Aorta (tissue), 5 donors: ENCODE measurements at regions of chr5 and their contacts with region 1.

Region 1: DNA sequence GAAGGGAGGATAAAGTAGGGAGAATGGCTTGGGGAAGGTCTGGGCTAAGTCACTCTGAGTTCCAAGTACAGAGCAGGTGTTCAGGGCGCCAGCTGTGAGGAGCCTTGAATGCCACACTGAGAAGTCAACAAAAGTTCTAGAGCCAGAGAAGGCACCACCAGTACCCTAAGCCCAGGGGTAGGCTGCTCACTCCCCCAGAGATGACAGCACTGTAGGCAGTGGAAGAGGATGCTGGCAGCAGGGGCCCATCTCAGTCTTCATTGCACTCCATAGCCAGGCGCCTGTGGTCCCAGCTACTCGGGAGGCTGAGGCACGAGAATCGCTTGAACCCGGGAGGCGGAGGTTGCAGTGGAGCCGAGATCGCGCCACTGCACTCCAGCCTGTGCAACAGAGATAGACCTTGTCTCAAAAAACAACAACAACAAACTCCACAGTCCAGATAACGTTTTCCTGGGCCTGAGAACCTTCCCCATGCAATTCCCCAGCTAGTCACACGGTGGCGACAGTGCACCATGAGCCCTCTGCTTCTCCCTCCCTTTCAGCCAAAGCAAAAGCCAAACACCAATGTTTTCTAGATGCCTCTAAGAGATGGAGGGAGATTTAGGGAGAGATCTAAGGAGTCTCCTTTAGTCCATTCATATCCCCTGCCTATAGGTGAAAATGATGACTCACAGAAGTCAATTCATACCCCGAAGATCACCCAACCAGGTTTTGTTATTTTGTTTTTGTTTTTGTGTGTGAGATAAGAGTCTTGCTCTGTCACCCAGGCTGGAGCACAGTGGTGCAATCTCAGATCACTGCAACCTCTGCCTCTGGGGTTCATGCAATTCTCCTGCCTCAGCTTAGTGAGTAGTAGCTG is 19.8 kb upstream of the NSD1 start:
- DNase-seq: peak; percentile 78 to 93
- ATAC-seq: peak; percentile 82
- H3K4me3 ChIP-seq: no peak overlapping the region
- H3K27ac ChIP-seq: no peak overlapping the region
- H3K4me1 ChIP-seq: no peaks in the 10 kb centered on the region
- H3K27me3 ChIP-seq: no peaks in the 10 kb centered on the region

Region 2: DNA sequence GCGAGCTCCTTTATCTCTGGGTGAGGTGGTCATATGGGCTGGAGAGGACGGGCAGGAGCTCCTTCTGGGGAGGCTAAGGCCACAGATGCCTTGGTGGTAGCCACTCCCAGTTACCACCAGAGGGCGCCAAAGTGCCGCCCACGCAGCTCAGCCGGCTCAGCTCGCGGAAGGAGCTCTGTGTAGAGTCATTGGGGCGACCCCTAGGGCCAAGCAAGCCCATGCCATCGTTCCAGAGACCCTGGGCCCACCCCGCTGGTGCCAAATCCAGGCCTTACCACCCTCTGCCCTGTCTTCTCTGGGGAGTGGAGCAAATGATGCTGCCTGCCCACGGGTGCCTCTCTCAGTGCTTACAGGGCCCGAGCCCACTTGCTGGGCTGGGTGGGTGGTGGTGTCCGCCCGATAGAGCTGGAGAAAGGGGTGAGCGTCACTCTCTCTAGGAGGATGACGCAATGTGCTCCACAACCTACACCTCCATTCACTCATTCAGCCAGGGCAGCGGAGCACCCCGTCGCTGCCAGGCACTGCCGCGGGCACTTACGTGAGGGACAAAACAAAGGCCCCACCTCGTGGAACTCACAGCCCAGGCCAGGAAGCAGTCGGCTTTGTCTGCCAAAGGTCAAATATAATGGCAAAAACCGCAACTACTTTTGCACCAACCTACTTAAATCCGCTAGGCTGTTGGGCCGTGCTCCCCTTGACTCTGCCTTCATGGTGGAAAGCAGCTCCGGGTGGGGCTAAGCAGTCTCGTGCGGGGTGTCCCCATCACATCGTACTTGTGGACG is 452.7 kb before region 1 on chr5:
- intact Hi-C with region 1: loop called in 1 of 2 experiments (anchors 5 kb)
- DNase-seq: peak; percentile 79 to 91
- ATAC-seq: peak; percentile 85
- H3K4me3 ChIP-seq: no peak overlapping the region
- H3K27ac ChIP-seq: no peak overlapping the region
- H3K4me1 ChIP-seq: no peaks in the 10 kb centered on the region
- H3K27me3 ChIP-seq: no peaks in the 10 kb centered on the region

Region 3: GRCh38 chr5:176780792-176781375 is 332.9 kb before region 1 on chr5:
- intact Hi-C with region 1: no loop called
- DNase-seq: peak in 1 of 2 donors; percentile 51
- ATAC-seq: no peak
- H3K4me3 ChIP-seq: no peak overlapping the region
- H3K27ac ChIP-seq: no peak overlapping the region
- H3K4me1 ChIP-seq: no peaks in the 10 kb centered on the region
- H3K27me3 ChIP-seq: no peaks in the 10 kb centered on the region

Region 4: GRCh38 chr5:177049285-177049684 is 64.5 kb before region 1 on chr5:
- intact Hi-C with region 1: no loop called
- DNase-seq: no peak
- ATAC-seq: no peak
- H3K4me3 ChIP-seq: no peak overlapping the region
- H3K27ac ChIP-seq: no peak overlapping the region
- H3K4me1 ChIP-seq: no peaks in the 10 kb centered on the region
- H3K27me3 ChIP-seq: no peaks in the 10 kb centered on the region

Region 5: DNA sequence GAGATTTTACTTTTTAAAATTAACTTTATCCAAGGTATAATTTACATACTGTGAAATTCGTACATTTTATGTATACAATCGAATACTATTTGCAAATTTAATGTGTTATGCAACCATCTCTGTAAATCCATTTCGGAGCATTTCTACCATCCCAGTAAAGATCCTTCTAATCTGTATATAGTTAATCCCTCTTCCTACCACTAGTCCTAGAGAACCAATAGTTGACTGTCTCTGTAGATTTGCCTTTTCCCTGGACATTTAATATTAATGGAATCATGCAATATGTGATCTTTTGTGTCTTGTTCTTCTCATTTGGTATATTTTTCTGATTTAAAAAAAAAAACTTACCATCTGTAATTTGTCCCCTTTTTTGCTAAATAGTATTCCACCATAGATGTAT is 115.0 kb after region 1 on chr5:
- intact Hi-C with region 1: loop called in 1 of 2 experiments (anchors 10 kb)
- DNase-seq: no peak
- ATAC-seq: no peak
- H3K4me3 ChIP-seq: no peak overlapping the region
- H3K27ac ChIP-seq: no peak overlapping the region
- H3K4me1 ChIP-seq: peaks cover 2 to 5% of the 10 kb centered on the region in 2 donors
- H3K27me3 ChIP-seq: no peaks in the 10 kb centered on the region

Region 6: DNA sequence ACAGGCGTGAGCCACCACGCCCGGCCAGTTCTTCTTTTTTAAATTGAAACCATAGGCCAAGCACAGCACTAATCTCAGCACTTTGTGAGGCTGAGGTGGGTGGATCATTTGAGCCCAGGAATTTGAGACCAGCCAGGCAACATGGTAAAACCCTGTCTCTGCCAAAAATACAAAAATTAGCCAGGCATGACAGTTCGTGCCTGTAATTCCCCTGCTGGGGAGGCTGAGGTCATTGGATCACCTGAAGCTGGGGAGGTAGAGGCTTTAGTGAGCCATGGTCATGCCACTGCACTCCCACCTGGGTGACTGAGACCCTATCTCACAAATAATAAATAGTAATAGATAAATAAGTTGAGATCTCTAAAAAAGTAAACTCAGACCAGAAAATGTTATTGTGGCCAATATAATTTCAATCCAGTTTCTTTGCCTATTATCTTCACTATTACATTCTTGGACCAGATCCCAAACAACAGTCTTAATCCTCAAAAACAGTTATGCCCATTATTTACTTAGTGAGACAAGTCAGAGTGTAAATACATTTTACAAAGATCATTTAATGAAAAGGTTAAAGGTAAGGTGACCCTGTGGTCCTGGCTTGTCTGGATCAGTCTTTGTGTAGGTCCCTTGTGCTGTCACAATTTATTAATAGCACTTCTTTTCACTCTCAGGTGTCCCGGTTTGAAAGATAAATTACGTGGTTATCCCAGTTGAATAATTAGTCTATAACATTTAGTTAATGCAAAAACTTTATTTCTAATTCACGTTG is 136.1 kb after region 1 on chr5:
- intact Hi-C with region 1: loop called in 1 of 2 experiments (anchors 5 kb)
- DNase-seq: no peak
- ATAC-seq: no peak
- H3K4me3 ChIP-seq: no peak overlapping the region
- H3K27ac ChIP-seq: no peak overlapping the region
- H3K4me1 ChIP-seq: no peaks in the 10 kb centered on the region
- H3K27me3 ChIP-seq: no peaks in the 10 kb centered on the region

Region 7: GRCh38 chr5:177311723-177312648 is 198.2 kb after region 1 on chr5 and contains the start of gene MXD3:
- intact Hi-C with region 1: loop called in 1 of 2 experiments (anchors 5 kb)
- DNase-seq: peak; percentile 98
- ATAC-seq: peak; percentile 93
- H3K4me3 ChIP-seq: peak within 1 kb of the TSS; percentile 29 to 36
- H3K27ac ChIP-seq: no peak within 1 kb of the TSS
- H3K4me1 ChIP-seq: no peaks in the 10 kb centered on the region
- H3K27me3 ChIP-seq: no peaks in the 10 kb centered on the region
- total RNA-seq, gene MXD3: 9.1 to 9.2 TPM